Naive thymus-derived CD4-positive, alpha-beta T cell (primary cell): ENCODE measurements at regions of chr9 and their contacts with region 1.

Region 1: DNA sequence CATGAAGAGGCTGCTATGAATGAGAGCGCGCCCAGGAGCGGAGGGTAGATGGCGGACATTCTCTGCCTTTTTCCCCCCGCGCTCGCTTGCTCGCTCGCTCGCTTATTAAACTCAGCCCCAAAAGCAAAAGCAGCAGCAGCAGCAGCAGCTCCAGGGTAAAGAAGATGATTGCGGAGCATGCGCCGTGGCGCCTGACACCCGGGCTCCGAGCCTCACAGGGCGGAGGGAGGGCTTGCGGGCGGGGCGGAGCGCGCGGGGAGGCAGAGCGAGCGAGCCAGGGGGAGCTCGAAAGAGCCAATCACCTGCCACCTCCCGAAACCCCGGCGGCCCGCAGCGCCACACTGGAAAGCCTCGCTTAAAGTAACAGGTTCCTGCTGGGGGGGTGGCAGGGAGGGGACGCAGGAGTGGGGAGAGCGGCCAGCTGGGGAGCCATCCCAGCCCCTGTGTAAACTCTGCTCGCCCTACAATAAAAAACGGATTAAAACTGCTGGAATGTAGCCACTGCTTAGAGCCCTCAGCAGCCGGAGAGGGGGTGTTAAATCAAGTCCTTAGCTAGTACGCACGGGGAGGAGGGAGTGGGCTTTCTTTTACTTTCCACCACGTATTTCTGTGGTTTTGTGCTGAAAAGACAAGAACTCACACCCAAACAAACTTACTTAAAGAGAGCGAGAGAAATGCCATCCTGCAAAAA is at the start of gene MLLT3:
- DNase-seq: peak; percentile 91 to 98 (median 98)
- ATAC-seq: peak; percentile 88
- H3K4me3 ChIP-seq: peak within 1 kb of the TSS; percentile 84
- H3K4me3 Mint-ChIP-seq: peak within 1 kb of the TSS; percentile 92 to 100 (median 98)
- H3K27ac ChIP-seq: peak within 1 kb of the TSS; percentile 89
- H3K27ac Mint-ChIP-seq: peak within 1 kb of the TSS; percentile 89 to 100 (median 99)
- H3K4me1 ChIP-seq: peaks cover 21 to 40% of the 10 kb centered on the region in 2 donors
- H3K4me1 Mint-ChIP-seq: peaks cover 30 to 48% (median 45%) of the 10 kb centered on the region in 7 donors
- H3K27me3 ChIP-seq: no peaks in the 10 kb centered on the region
- H3K27me3 Mint-ChIP-seq: no peaks in the 10 kb centered on the region
- total RNA-seq, gene MLLT3: 40.9 to 85.3 (median 71.3) TPM

Region 2: GRCh38 chr9:19102631-19103345 is 1519.7 kb before region 1 on chr9 and contains the start of gene HAUS6:
- CTCF ChIA-PET with region 1: no interaction called
- POLR2A ChIA-PET with region 1: no interaction called
- intact Hi-C with region 1: loop called in 1 of 2 experiments (anchors 5 kb)
- DNase-seq: peak; percentile 79 to 97 (median 95)
- ATAC-seq: peak; percentile 98
- H3K4me3 ChIP-seq: peak within 1 kb of the TSS; percentile 62
- H3K4me3 Mint-ChIP-seq: peak within 1 kb of the TSS; percentile 90 to 98 (median 94)
- H3K27ac ChIP-seq: peak within 1 kb of the TSS; percentile 86
- H3K27ac Mint-ChIP-seq: peak within 1 kb of the TSS; percentile 88 to 99 (median 96)
- H3K4me1 ChIP-seq: peaks cover 4 to 9% of the 10 kb centered on the region in 2 donors
- H3K4me1 Mint-ChIP-seq: peaks cover 13 to 43% (median 25%) of the 10 kb centered on the region in 7 donors
- H3K27me3 ChIP-seq: no peaks in the 10 kb centered on the region
- H3K27me3 Mint-ChIP-seq: no peaks in the 10 kb centered on the region
- total RNA-seq, gene HAUS6: 11.4 to 25.4 (median 19.6) TPM

Region 3: GRCh38 chr9:19999491-20000057 is 622.9 kb before region 1 on chr9:
- CTCF ChIA-PET with region 1: no interaction called
- POLR2A ChIA-PET with region 1: no interaction called
- intact Hi-C with region 1: loop called in 1 of 2 experiments (anchors 2 kb)
- DNase-seq: peak in 1 of 9 donors; percentile 61
- ATAC-seq: peak; percentile 37
- H3K4me3 ChIP-seq: no peak overlapping the region
- H3K4me3 Mint-ChIP-seq: peak overlapping the region in 1 of 10 donors; percentile 59
- H3K27ac ChIP-seq: no peak overlapping the region
- H3K27ac Mint-ChIP-seq: peak overlapping the region in 3 of 9 donors; percentile 30 to 93 (median 39)
- H3K4me1 ChIP-seq: peaks cover 0 to 11% of the 10 kb centered on the region in 2 donors
- H3K4me1 Mint-ChIP-seq: peaks cover 0 to 51% (median 8%) of the 10 kb centered on the region in 7 donors
- H3K27me3 ChIP-seq: no peaks in the 10 kb centered on the region
- H3K27me3 Mint-ChIP-seq: no peaks in the 10 kb centered on the region

Region 4: DNA sequence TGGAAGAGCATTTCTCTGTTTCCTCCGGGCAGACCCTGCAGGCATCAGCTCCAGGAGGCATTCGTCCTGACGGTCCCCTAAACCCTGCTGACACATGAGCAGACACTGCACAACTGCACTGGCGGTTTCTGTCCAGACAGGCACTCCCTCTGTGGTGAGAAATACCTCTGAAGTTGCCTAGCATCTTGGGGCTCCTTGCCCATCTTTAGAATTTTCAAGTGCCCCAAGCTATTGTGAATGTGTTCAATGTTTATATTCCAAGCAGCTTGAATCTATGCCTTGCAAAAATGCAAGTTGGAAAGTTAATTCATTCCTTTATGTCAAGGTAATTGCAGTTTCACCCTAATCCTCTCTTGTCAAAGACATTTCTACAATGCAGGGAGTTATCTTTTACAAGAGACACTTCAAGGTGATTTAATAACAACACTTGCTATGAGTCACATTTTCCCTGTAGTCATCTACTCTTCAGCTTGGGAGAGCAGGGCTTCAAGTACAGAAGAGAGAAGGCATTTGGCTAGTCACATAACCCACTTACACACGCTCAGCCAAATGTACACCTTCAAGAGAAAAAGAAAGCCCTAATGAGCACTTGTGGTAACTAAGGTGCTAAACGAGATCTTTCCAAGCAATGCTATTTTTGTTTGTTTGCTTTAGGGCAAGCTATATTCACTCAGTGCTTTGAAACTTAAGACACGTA is 302.7 kb before region 1 on chr9:
- CTCF ChIA-PET with region 1: no interaction called
- POLR2A ChIA-PET with region 1: interaction called, 5 read pairs
- intact Hi-C with region 1: loop called (anchors 1 to 2 kb)
- DNase-seq: peak in 1 of 9 donors; percentile 33
- ATAC-seq: no peak
- H3K4me3 ChIP-seq: no peak overlapping the region
- H3K4me3 Mint-ChIP-seq: peak overlapping the region in 9 of 10 donors; percentile 5 to 89 (median 33)
- H3K27ac ChIP-seq: no peak overlapping the region
- H3K27ac Mint-ChIP-seq: peak overlapping the region; percentile 62 to 99 (median 92)
- H3K4me1 ChIP-seq: peaks cover 44 to 95% of the 10 kb centered on the region in 2 donors
- H3K4me1 Mint-ChIP-seq: peaks cover 53 to 100% (median 96%) of the 10 kb centered on the region in 7 donors
- H3K27me3 ChIP-seq: no peaks in the 10 kb centered on the region
- H3K27me3 Mint-ChIP-seq: peaks cover 0 to 2% (median 0%) of the 10 kb centered on the region in 5 donors

Region 5: DNA sequence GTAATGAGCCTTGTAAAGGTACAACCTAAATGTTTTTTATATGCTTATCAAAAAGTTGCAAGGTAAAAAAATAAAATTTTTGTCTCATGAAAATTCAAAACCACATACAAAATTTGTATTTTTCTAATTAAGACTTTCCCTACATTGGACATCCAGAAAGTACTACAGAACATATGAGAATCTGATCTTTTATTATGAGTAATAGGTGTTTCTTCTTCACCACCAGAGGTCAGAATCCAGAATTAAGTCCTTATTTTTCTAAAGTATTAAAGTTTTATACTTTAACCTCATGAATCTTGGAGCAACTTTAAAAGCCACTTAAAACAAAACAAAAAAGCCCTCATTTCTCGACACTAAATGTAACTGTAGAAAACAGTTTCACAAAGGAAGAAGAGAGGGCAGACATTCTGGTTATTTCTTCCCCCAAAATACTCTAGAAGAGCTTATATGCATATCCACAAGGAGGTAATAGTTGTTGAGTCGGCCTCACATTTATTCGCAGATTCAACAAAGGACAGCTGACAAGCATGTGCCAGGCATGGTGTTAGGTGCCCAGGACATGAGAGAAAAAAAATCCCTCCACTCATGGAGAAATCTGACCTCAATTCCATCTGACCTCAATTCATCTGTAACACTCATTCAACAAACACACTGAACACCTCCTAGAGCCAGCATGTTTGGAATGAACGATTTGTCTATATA is 69.5 kb before region 1 on chr9:
- CTCF ChIA-PET with region 1: interaction called, 3 read pairs
- POLR2A ChIA-PET with region 1: interaction called, 7 read pairs
- intact Hi-C with region 1: loop called (anchors 1 kb)
- DNase-seq: peak in 1 of 9 donors; percentile 28
- ATAC-seq: no peak
- H3K4me3 ChIP-seq: no peak overlapping the region
- H3K4me3 Mint-ChIP-seq: peak overlapping the region; percentile 27 to 84 (median 46)
- H3K27ac ChIP-seq: no peak overlapping the region
- H3K27ac Mint-ChIP-seq: peak overlapping the region; percentile 2 to 79 (median 54)
- H3K4me1 ChIP-seq: peaks cover 23 to 33% of the 10 kb centered on the region in 2 donors
- H3K4me1 Mint-ChIP-seq: peaks cover 58 to 86% (median 79%) of the 10 kb centered on the region in 7 donors
- H3K27me3 ChIP-seq: no peaks in the 10 kb centered on the region
- H3K27me3 Mint-ChIP-seq: no peaks in the 10 kb centered on the region

Region 6: GRCh38 chr9:20788526-20789451 is 166.3 kb after region 1 on chr9:
- CTCF ChIA-PET with region 1: no interaction called
- POLR2A ChIA-PET with region 1: no interaction called
- intact Hi-C with region 1: no loop called
- DNase-seq: no peak
- ATAC-seq: no peak
- H3K4me3 ChIP-seq: no peak overlapping the region
- H3K4me3 Mint-ChIP-seq: no peak overlapping the region
- H3K27ac ChIP-seq: no peak overlapping the region
- H3K27ac Mint-ChIP-seq: no peak overlapping the region
- H3K4me1 ChIP-seq: no peaks in the 10 kb centered on the region
- H3K4me1 Mint-ChIP-seq: peaks cover 0 to 5% (median 0%) of the 10 kb centered on the region in 7 donors
- H3K27me3 ChIP-seq: no peaks in the 10 kb centered on the region
- H3K27me3 Mint-ChIP-seq: no peaks in the 10 kb centered on the region

Region 7: GRCh38 chr9:20884985-20885593 is 262.6 kb after region 1 on chr9:
- CTCF ChIA-PET with region 1: interaction called, 4 read pairs
- POLR2A ChIA-PET with region 1: no interaction called
- intact Hi-C with region 1: loop called (anchors 1 kb)
- DNase-seq: peak in 8 of 9 donors; percentile 23 to 54 (median 43)
- ATAC-seq: peak; percentile 71
- H3K4me3 ChIP-seq: no peak overlapping the region
- H3K4me3 Mint-ChIP-seq: no peak overlapping the region
- H3K27ac ChIP-seq: no peak overlapping the region
- H3K27ac Mint-ChIP-seq: no peak overlapping the region
- H3K4me1 ChIP-seq: no peaks in the 10 kb centered on the region
- H3K4me1 Mint-ChIP-seq: no peaks in the 10 kb centered on the region
- H3K27me3 ChIP-seq: no peaks in the 10 kb centered on the region
- H3K27me3 Mint-ChIP-seq: no peaks in the 10 kb centered on the region

Region 8: DNA sequence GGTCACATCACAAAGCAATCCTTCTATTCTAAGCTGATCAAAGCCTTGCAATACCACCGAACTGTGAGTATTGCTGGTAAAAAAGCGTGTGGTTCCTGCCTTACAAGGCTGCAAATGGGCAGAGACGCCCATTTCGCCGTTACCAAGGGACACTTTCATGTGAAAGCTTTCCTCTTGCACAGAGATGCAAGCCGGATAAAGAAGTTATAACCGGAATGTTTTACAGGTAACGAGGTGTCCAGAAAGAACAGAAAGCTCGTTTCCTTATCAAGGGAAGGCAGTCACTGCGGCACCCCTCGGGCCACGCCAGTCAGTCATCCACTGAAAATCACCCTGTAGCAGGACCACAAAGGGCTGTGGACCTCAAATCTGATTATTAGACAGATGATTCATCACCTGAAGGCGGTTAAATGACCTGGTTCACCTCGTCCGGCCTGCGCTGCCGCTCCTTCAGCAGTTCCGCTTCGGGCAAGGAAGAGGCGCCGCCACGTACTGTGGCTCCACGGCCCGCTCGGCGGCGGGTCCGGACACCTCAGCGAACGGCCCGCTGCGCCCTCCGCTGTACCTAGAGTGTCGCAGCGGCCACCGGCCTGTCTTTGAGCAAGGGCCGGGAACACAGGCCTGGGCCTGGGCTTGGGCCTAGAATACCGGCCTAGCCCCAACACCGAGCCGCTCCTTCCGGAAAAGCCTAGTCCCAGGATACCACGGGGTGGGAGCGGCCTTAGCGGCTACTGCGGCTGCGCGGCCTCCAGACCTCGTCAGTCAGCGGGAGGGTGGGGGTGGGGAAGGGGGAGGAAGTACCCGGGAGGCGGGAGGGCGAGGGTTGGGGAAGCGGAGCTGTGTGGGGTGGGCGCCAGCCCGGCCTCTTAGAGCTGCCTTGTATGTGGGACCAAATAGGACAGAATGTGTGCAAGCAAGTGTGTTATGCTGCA is 712.5 kb after region 1 on chr9 and contains the start of gene KLHL9:
- CTCF ChIA-PET with region 1: no interaction called
- POLR2A ChIA-PET with region 1: no interaction called
- intact Hi-C with region 1: loop called (anchors 1 to 5 kb)
- DNase-seq: peak; percentile 72 to 87 (median 85)
- ATAC-seq: peak; percentile 94
- H3K4me3 ChIP-seq: peak within 1 kb of the TSS; percentile 96
- H3K4me3 Mint-ChIP-seq: peak within 1 kb of the TSS; percentile 90 to 97 (median 94)
- H3K27ac ChIP-seq: peak within 1 kb of the TSS; percentile 95
- H3K27ac Mint-ChIP-seq: peak within 1 kb of the TSS; percentile 90 to 98 (median 95)
- H3K4me1 ChIP-seq: peaks cover 15 to 35% of the 10 kb centered on the region in 2 donors
- H3K4me1 Mint-ChIP-seq: peaks cover 36 to 65% (median 60%) of the 10 kb centered on the region in 7 donors
- H3K27me3 ChIP-seq: no peaks in the 10 kb centered on the region
- H3K27me3 Mint-ChIP-seq: peaks cover 0 to 27% (median 0%) of the 10 kb centered on the region in 5 donors
- total RNA-seq, gene KLHL9: 11.8 to 37.7 (median 19.1) TPM